ENCODE measurements at regions of chr1 and their contacts with region 1.

Region 1: DNA sequence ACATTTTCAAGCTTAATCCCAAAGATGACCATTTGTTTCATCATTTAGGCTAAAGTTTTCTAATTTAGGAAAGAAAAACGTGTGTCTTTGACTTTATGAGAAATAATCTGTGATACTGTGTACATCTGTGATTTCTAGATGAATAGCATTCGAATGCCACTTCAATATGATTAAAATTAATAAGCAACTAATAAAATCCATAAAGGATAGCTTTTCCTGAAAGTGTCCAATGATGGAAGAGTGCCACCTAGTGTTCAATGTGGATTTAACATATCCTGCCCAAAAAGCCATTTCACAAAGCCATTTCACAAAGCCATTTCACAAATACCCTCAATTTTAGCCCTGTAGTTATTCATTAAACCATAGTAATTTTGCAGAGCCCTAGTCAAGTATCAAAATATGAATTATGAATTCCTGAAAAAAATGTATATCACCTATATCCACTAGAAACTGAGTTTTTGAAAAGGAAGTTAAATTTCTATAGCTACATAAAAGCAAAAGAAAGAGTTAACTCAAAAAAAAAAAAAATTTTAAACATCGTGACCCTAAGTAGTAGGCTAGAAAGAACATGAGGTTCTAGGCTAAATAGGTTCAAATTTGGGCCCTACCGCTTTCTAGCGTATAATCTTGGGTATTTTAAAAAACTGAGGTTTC is 19.1 kb downstream of the NME7 start:
- DNase-seq: no peak
- H3K4me3 ChIP-seq: no peak overlapping the region
- H3K27ac ChIP-seq: no peak overlapping the region
- H3K4me1 ChIP-seq: no peaks in the 10 kb centered on the region
- H3K27me3 ChIP-seq: no peaks in the 10 kb centered on the region
- CTCF ChIP-seq: peak; percentile 91

Region 2: DNA sequence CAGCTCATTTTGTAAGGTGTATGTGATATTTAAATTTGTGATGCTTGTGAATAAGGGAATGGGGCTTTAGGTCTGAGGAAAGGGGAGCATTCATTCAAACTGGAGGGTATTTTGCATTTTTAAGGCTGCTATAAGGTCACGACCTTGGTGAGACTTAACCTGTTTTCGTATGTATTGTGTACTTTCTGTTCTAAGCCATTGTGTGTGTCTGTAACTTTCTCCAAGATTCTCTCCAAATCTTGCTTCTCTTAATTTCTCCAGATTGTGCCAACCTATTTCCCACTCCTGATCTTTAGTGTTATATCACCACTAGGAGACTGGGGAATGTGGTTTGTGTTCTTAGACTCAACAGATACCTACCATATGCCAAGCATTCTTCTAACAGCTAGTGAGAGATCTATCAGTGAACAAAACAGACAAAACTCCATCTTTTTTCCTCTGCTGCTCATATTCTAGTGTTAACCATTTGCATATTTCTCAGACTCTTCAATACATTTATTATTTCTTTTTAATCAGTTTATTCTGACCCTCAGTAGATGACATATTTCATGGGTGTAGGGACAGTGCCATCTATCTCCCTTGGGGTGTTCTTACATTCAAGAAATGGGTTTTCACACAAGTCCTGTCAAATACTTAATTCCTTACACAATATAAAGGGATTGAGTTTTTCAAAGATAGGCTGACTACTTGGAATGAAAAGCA is 214.6 kb before region 1 on chr1:
- CTCF ChIA-PET with region 1: no interaction called
- POLR2A ChIA-PET with region 1: no interaction called
- intact Hi-C with region 1: loop called (anchors 5 kb)
- DNase-seq: no peak
- H3K4me3 ChIP-seq: no peak overlapping the region
- H3K27ac ChIP-seq: no peak overlapping the region
- H3K4me1 ChIP-seq: no peaks in the 10 kb centered on the region
- H3K27me3 ChIP-seq: no peaks in the 10 kb centered on the region
- CTCF ChIP-seq: peak; percentile 54

Measured in PC-9 (cell line).